H1 (cell line): ENCODE measurements at regions of chr3 and their contacts with region 1.

Region 1: DNA sequence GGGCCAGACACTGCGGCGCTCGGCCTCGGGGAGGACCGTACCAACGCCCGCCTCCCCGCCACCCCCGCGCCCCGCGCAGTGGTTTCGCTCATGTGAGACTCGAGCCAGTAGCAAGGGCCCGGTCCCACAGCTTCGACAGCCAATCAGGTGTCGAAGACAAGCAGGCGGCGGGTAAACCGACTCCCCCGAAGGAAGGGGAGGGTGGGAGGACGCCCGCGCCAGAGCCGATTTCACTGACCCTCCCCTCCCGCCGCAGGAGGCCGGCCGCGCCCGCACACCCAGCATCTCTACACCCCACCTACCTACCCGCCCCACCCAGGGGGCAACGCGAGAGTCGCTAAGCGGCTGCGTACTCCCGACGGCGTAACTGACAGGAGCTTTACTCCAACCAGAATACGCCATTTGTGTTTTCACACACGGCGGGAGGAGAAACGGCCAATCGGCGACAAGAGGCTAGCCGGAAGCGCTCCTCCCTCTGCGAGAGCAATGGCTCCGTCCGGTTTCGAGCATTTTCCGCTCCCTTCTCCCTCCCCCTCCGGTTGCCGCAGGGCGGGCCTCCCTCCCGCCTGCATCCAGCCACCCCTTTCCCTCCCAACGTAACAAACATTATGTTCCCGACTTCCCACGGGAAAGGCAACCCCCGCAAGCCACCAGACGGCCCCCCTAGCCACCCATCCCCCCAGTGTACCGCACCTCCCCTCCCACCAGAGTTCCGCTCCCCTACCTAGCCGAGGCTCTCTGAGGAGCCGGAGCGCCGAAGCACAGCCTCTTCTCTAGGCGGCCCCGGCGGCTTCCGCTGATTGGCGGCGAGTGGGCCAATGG is 504 bp upstream of the SETD5 start:
- DNase-seq: peak; percentile 97 to 98
- H3K4me3 ChIP-seq: peak overlapping the region; percentile 80 to 93 (median 87)
- H3K27ac ChIP-seq: peak overlapping the region; percentile 89
- H3K4me1 ChIP-seq: peaks cover 5 to 20% (median 11%) of the 10 kb centered on the region in 4 experiments; a peak in 6 of 7 replicates
- H3K27me3 ChIP-seq: no peaks in the 10 kb centered on the region
- CTCF ChIP-seq: no peak
- EP300 ChIP-seq: peak in 1 of 2 experiments; percentile 98; a peak in 2 of 3 replicates
- POLR2A ChIP-seq: peak; percentile 94 to 98
- RAD21 ChIP-seq: no peak

Region 2: GRCh38 chr3:9352917-9353752 is 43.8 kb before region 1 on chr3:
- CTCF ChIA-PET with region 1: interaction called, 7 read pairs
- POLR2A ChIA-PET with region 1: interaction called, 40 read pairs
- DNase-seq: peak; percentile 34 to 74
- H3K4me3 ChIP-seq: no peak overlapping the region
- H3K27ac ChIP-seq: peak overlapping the region; percentile 76
- H3K4me1 ChIP-seq: peaks cover 10 to 30% (median 16%) of the 10 kb centered on the region in 4 experiments
- H3K27me3 ChIP-seq: no peaks in the 10 kb centered on the region
- CTCF ChIP-seq: peak; percentile 56 to 90 (median 80)
- EP300 ChIP-seq: no peak
- POLR2A ChIP-seq: no peak
- RAD21 ChIP-seq: peak; percentile 86 to 88

Region 3: GRCh38 chr3:9373465-9373864 is 23.4 kb before region 1 on chr3:
- CTCF ChIA-PET with region 1: interaction called, 4 read pairs
- POLR2A ChIA-PET with region 1: interaction called, 52 read pairs
- DNase-seq: no peak
- H3K4me3 ChIP-seq: no peak overlapping the region
- H3K27ac ChIP-seq: no peak overlapping the region
- H3K4me1 ChIP-seq: no peaks in the 10 kb centered on the region
- H3K27me3 ChIP-seq: no peaks in the 10 kb centered on the region
- CTCF ChIP-seq: no peak
- EP300 ChIP-seq: no peak
- POLR2A ChIP-seq: no peak
- RAD21 ChIP-seq: no peak

Region 4: GRCh38 chr3:9409981-9410854 is 13.3 kb after region 1 on chr3:
- CTCF ChIA-PET with region 1: interaction called, 4 read pairs
- POLR2A ChIA-PET with region 1: interaction called, 300 read pairs
- DNase-seq: no peak
- H3K4me3 ChIP-seq: no peak overlapping the region
- H3K27ac ChIP-seq: no peak overlapping the region
- H3K4me1 ChIP-seq: peaks cover 0 to 15% (median 2%) of the 10 kb centered on the region in 4 experiments; a peak in 3 of 7 replicates
- H3K27me3 ChIP-seq: no peaks in the 10 kb centered on the region
- CTCF ChIP-seq: no peak
- EP300 ChIP-seq: no peak
- POLR2A ChIP-seq: no peak
- RAD21 ChIP-seq: no peak

Region 5: DNA sequence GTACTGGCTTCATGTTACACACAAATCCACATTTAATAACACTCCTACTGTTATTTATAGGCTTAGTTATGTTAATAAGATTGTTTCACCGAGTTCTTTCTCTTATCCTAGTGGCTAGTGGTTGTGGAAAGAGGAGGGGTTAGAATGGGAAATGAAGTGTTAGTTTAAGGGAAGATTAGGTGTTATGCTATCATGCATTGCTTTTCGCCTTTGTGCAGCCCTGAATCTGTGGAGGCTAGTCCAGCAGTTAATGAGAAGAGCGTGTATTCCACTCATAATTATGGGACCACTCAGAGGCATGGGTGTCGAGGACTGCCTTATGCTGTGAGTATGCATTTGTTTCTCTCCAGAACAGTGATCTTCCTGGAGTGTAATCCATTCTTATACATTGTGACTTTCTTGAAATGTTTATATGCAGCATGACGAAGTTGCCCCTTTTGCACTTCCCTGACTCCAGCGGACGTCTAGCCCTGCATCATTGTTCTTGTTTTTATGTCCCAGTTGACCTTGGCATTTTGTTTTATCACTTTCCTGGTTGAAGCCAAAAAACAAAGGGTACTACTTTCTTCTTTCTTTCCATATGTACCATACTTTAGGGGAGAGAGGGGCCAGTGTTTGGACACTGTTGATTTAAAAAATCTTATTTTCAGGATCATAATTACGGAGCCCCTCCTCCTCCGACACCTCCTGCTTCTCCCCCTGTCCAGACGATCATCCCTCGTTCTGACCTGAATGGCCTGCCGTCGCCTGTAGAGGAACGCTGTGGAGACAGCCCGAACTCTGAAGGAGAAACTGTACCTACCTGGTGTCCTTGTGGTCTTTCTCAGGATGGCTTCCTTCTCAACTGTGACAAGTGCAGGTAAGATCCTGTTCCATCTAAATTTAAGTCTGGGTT is 37.0 kb after region 1 on chr3:
- CTCF ChIA-PET with region 1: no interaction called
- POLR2A ChIA-PET with region 1: interaction called, 29 read pairs
- DNase-seq: no peak
- H3K4me3 ChIP-seq: no peak overlapping the region
- H3K27ac ChIP-seq: no peak overlapping the region
- H3K4me1 ChIP-seq: no peaks in the 10 kb centered on the region
- H3K27me3 ChIP-seq: no peaks in the 10 kb centered on the region
- CTCF ChIP-seq: no peak
- EP300 ChIP-seq: no peak
- POLR2A ChIP-seq: no peak
- RAD21 ChIP-seq: no peak

Region 6: GRCh38 chr3:9786825-9787669 is 390.1 kb after region 1 on chr3:
- CTCF ChIA-PET with region 1: no interaction called
- POLR2A ChIA-PET with region 1: no interaction called
- DNase-seq: peak in 1 of 2 experiments; percentile 55
- H3K4me3 ChIP-seq: no peak overlapping the region
- H3K27ac ChIP-seq: no peak overlapping the region
- H3K4me1 ChIP-seq: peaks cover 0 to 6% (median 0%) of the 10 kb centered on the region in 4 experiments; a peak in 2 of 7 replicates
- H3K27me3 ChIP-seq: no peaks in the 10 kb centered on the region
- CTCF ChIP-seq: peak; percentile 60 to 82 (median 71)
- EP300 ChIP-seq: no peak
- POLR2A ChIP-seq: 0 out of 3 replicates have a peak, but pooled peaks of 1 of the 2 experiments have one; percentile 44
- RAD21 ChIP-seq: peak in 1 of 2 experiments; percentile 31; a peak in 1 of 4 replicates